HEK293 (cell line): ENCODE measurements at regions of chr20 and their contacts with region 1.

Region 1: GRCh38 chr20:17682103-17682888 is at the start of gene RRBP1:
- H3K4me3 ChIP-seq: peak within 1 kb of the TSS; percentile 72
- H3K27ac ChIP-seq: peak within 1 kb of the TSS; percentile 72
- H3K4me1 ChIP-seq: peaks cover 5% of the 10 kb centered on the region; the same call in 1 of the 2 replicates
- CTCF ChIP-seq: peak; percentile 67

Region 2: GRCh38 chr20:17530716-17531664 is 151.3 kb before region 1 on chr20 and contains the start of gene BFSP1:
- CTCF ChIA-PET with region 1: no interaction called
- POLR2A ChIA-PET with region 1: interaction called, 12 read pairs
- H3K4me3 ChIP-seq: peak within 1 kb of the TSS; percentile 51
- H3K27ac ChIP-seq: peak within 1 kb of the TSS; percentile 90
- H3K4me1 ChIP-seq: peaks cover 6% of the 10 kb centered on the region
- CTCF ChIP-seq: no peak

Region 3: GRCh38 chr20:17569616-17570346 is 112.5 kb before region 1 on chr20 and contains the start of gene DSTN:
- CTCF ChIA-PET with region 1: interaction called, 3 read pairs
- POLR2A ChIA-PET with region 1: interaction called, 16 read pairs
- H3K4me3 ChIP-seq: peak within 1 kb of the TSS; percentile 98
- H3K27ac ChIP-seq: peak within 1 kb of the TSS; percentile 99
- H3K4me1 ChIP-seq: peaks cover 8% of the 10 kb centered on the region
- CTCF ChIP-seq: no peak

Region 4: GRCh38 chr20:17595518-17596255 is 86.6 kb before region 1 on chr20:
- CTCF ChIA-PET with region 1: no interaction called
- POLR2A ChIA-PET with region 1: no interaction called
- H3K4me3 ChIP-seq: no peak overlapping the region
- H3K27ac ChIP-seq: no peak overlapping the region
- H3K4me1 ChIP-seq: no peaks in the 10 kb centered on the region
- CTCF ChIP-seq: no peak

Region 5: GRCh38 chr20:17636523-17637412 is 45.5 kb before region 1 on chr20:
- CTCF ChIA-PET with region 1: no interaction called
- POLR2A ChIA-PET with region 1: no interaction called
- H3K4me3 ChIP-seq: no peak overlapping the region
- H3K27ac ChIP-seq: no peak overlapping the region
- H3K4me1 ChIP-seq: no peaks in the 10 kb centered on the region
- CTCF ChIP-seq: no peak; the same call in 1 of the 2 replicates

Region 6: GRCh38 chr20:17666481-17666880 is 15.8 kb before region 1 on chr20:
- CTCF ChIA-PET with region 1: interaction called, 10 read pairs
- POLR2A ChIA-PET with region 1: interaction called, 5 read pairs
- H3K4me3 ChIP-seq: no peak overlapping the region
- H3K27ac ChIP-seq: no peak overlapping the region
- H3K4me1 ChIP-seq: no peaks in the 10 kb centered on the region
- CTCF ChIP-seq: no peak

Region 7: DNA sequence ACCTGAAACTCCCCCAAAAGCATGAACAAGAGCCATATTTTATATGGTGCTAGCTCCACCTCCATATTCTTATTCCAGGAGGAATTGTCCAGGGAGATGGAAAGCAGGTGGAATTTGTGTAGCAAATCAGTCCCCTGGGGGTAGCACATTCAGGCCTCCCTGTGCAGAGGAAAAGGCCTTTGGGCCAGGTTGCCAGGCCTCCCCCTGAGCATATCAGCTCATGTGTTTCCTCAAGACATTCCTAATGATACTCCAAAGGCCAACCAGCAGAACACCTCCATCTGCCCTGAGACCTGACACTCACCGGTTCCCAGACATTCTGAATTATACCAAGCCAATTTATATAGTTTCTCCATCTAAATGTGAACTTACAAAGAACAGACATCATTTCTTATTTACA is 14.9 kb after region 1 on chr20:
- CTCF ChIA-PET with region 1: interaction called, 10 read pairs
- POLR2A ChIA-PET with region 1: interaction called, 4 read pairs
- H3K4me3 ChIP-seq: no peak overlapping the region
- H3K27ac ChIP-seq: no peak overlapping the region
- H3K4me1 ChIP-seq: no peaks in the 10 kb centered on the region
- CTCF ChIP-seq: no peak

Region 8: GRCh38 chr20:17938871-17939619 is 256.7 kb after region 1 on chr20:
- CTCF ChIA-PET with region 1: interaction called, 5 read pairs
- POLR2A ChIA-PET with region 1: interaction called, 10 read pairs
- H3K4me3 ChIP-seq: no peak overlapping the region
- H3K27ac ChIP-seq: peak overlapping the region; percentile 19; the same call in 1 of the 2 replicates
- H3K4me1 ChIP-seq: peaks cover 5% of the 10 kb centered on the region; the same call in 1 of the 2 replicates
- CTCF ChIP-seq: peak; percentile 60

Region 9: DNA sequence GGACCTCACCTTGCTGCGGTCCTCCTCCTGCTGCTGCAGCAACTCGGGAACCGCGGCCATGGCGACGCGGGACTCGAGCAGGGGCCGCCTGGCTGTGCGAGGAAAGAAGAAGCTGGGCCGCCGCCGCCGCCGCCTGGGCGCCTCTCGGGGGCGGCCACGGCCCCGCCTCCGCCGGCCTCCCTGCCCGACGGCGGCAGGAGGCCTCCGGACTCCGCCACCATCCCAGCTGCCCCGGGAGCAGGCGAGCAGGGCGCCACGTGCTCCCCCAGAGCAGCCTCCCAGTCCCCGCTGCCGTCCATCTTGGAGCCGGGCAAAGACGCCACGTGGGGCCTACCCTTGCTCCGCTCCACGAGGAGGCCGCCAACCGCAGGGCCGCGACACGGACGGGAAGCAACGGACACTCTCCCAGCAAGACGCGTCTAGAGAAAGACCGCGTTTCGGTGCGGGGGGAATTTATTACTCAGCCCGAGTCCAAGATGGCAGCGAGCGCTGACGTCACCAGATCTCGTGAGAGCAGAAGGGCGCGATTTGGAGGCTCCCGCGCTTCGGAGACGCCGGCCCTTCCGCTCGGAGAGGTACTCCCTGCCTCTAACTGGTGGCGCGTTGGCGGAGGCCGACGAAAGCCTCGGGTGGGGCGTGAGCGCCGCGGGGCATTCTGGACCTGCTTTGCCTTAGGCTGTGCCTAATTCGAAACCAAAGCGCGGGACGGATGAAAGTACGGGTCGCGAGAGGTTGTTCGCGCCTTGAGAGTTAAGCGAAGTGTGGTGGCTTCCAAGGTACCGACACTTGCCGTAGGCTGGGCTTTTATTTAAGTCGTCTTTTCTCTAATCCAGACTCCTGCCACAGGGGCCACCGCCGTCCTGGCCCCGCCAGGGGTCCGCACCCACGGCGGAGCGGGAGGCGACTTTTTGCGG is 286.3 kb after region 1 on chr20 and contains the starts of genes MGME1 and SNX5:
- CTCF ChIA-PET with region 1: no interaction called
- POLR2A ChIA-PET with region 1: interaction called, 16 read pairs
- H3K4me3 ChIP-seq: peak within 1 kb of the TSS; percentile 89
- H3K27ac ChIP-seq: peak within 1 kb of the TSS; percentile 97
- H3K4me1 ChIP-seq: peaks cover 8% of the 10 kb centered on the region; the same call in 1 of the 2 replicates
- CTCF ChIP-seq: 0 out of 2 replicates have a peak, but pooled peaks have one; percentile 33